ENCODE measurements at regions of chr11 and their contacts with region 1.

Region 1: GRCh38 chr11:3854977-3855807 is at the start of gene STIM1:
- DNase-seq: peak; percentile 96 to 99 (median 97)
- ATAC-seq: peak; percentile 70 to 75
- H3K4me3 Mint-ChIP-seq: peak within 1 kb of the TSS; percentile 79 to 100 (median 94)
- H3K27ac Mint-ChIP-seq: peak within 1 kb of the TSS; percentile 94 to 100 (median 100)
- H3K4me1 Mint-ChIP-seq: peaks cover 39 to 72% (median 63%) of the 10 kb centered on the region in 4 donors
- H3K27me3 Mint-ChIP-seq: peaks cover 0 to 1% (median 0%) of the 10 kb centered on the region in 5 donors
- polyA plus RNA-seq, gene STIM1: 33.4 to 39.0 (median 38.9) TPM

Region 2: GRCh38 chr11:3807909-3808860 is 47.0 kb before region 1 on chr11 and contains the start of gene PGAP2:
- POLR2A ChIA-PET with region 1: interaction called, 11 read pairs
- DNase-seq: peak; percentile 32 to 74 (median 54)
- ATAC-seq: peak; percentile 70 to 81
- H3K4me3 Mint-ChIP-seq: peak within 1 kb of the TSS; percentile 94 to 100 (median 97)
- H3K27ac Mint-ChIP-seq: peak within 1 kb of the TSS; percentile 82 to 99 (median 94)
- H3K4me1 Mint-ChIP-seq: peaks cover 12 to 30% (median 17%) of the 10 kb centered on the region in 4 donors
- H3K27me3 Mint-ChIP-seq: no peaks in the 10 kb centered on the region
- polyA plus RNA-seq, gene PGAP2: 13.6 to 24.2 (median 21.9) TPM

Region 3: GRCh38 chr11:3867209-3868091 is 12.3 kb after region 1 on chr11:
- POLR2A ChIA-PET with region 1: interaction called, 68 read pairs
- DNase-seq: peak in 4 of 10 donors; percentile 25 to 46 (median 34)
- ATAC-seq: peak; percentile 51 to 68
- H3K4me3 Mint-ChIP-seq: peak overlapping the region; percentile 6 to 83 (median 64)
- H3K27ac Mint-ChIP-seq: peak overlapping the region; percentile 82 to 95 (median 90)
- H3K4me1 Mint-ChIP-seq: peaks cover 46 to 93% (median 93%) of the 10 kb centered on the region in 4 donors
- H3K27me3 Mint-ChIP-seq: no peaks in the 10 kb centered on the region

Region 4: DNA sequence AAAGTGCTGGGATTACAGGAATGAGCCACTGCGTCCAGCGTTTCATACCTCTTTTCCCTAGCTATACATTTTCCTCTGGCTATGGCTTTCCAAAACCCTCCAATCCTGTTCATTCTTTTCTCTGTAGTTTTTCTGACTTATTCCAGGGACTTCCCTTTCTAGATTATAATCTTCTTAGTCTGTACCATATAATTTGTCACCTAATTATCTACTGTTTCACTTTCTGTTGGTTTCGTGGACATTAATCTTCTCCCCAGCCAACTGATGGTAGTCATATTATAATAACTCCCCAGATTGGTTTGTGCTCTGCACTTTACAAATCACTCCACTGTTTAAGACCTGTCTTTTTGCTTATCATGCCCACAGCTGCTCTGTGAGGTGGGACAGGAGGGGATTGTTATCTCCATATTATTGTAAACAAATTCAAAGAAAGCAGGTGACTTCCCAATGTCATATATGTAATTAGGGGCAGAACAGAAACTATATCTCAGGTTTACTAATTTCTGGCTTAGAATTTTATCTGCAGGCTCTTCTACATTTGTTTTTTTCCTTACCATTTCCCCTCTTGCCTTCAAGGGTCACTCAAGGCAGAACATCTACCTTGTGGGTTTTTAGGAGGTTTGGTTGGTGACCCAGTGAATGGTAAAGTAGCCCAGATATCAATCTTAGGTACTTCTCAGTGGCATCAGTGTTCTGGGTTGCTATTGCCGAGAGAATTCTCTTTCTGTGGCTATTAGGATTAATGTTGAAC is 24.2 kb after region 1 on chr11:
- POLR2A ChIA-PET with region 1: interaction called, 26 read pairs
- DNase-seq: no peak
- ATAC-seq: no peak
- H3K4me3 Mint-ChIP-seq: peak overlapping the region in 7 of 10 donors; percentile 25 to 54 (median 34)
- H3K27ac Mint-ChIP-seq: peak overlapping the region; percentile 12 to 84 (median 73)
- H3K4me1 Mint-ChIP-seq: peaks cover 53 to 97% (median 84%) of the 10 kb centered on the region in 4 donors
- H3K27me3 Mint-ChIP-seq: no peaks in the 10 kb centered on the region

Region 5: GRCh38 chr11:3947061-3947460 is 91.9 kb after region 1 on chr11:
- POLR2A ChIA-PET with region 1: interaction called, 139 read pairs
- DNase-seq: peak in 9 of 10 donors; percentile 36 to 84 (median 73)
- ATAC-seq: peak; percentile 73 to 83
- H3K4me3 Mint-ChIP-seq: peak overlapping the region; percentile 66 to 88 (median 82)
- H3K27ac Mint-ChIP-seq: peak overlapping the region; percentile 77 to 99 (median 95)
- H3K4me1 Mint-ChIP-seq: peaks cover 58 to 97% (median 95%) of the 10 kb centered on the region in 4 donors
- H3K27me3 Mint-ChIP-seq: no peaks in the 10 kb centered on the region

Region 6: GRCh38 chr11:4072668-4073285 is 217.6 kb after region 1 on chr11:
- POLR2A ChIA-PET with region 1: interaction called, 70 read pairs
- DNase-seq: peak in 9 of 10 donors; percentile 39 to 79 (median 59)
- ATAC-seq: peak; percentile 84 to 85
- H3K4me3 Mint-ChIP-seq: no peak overlapping the region
- H3K27ac Mint-ChIP-seq: peak overlapping the region; percentile 36 to 91 (median 84)
- H3K4me1 Mint-ChIP-seq: peaks cover 31 to 57% (median 48%) of the 10 kb centered on the region in 4 donors
- H3K27me3 Mint-ChIP-seq: no peaks in the 10 kb centered on the region